ENCODE measurements at regions of chr22 and their contacts with region 1.

Region 1: DNA sequence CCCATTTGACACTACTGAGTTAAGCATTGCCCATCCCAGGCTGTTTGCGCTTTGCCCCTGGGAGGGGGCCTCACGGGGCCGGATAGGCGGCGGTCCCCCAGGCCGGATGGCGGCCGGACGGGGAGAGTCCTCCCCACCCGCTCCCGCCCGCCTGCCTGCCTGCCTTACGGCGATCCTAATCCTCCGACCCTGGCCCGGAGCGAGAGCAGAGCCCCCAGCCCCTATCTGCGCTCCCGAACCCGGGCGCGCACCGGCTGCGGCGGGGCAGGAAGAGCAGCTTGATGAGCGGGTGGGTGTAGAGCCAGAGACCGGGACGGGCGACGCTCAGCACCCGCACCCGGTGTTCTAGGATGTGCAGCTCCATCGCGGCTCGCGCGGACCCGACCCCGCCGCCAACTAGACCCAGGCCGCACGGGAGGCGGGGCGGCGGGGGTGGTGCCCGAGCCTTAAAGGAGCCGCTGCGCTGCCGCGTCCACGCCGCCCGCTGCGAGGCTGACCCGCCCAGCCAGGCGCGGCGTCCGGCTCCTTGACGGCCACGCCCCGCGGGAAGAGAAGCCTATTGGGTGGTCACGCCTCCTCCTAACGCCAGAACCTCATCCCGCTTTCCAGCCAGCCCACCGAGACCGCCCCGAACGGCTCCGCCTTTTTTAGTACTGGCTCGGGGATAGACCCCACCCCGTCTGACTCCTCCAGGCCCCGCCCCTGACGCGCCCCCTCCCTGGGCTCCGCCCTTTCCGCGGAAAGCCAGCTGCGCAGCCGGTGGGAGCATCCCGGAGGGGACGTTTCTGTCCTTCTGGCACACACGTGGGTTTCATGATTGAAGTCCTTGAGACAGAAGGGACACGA is at the start of gene CASTOR1:
- DNase-seq: peak; percentile 81 to 90
- ATAC-seq: peak; percentile 80 to 83 (median 81)
- H3K4me3 ChIP-seq: peak within 1 kb of the TSS; percentile 68
- H3K4me3 Mint-ChIP-seq: peak within 1 kb of the TSS; percentile 92
- H3K27ac ChIP-seq: peak within 1 kb of the TSS; percentile 66
- H3K27ac Mint-ChIP-seq: peak within 1 kb of the TSS; percentile 86 to 88
- H3K4me1 ChIP-seq: peaks cover 43% of the 10 kb centered on the region
- H3K4me1 Mint-ChIP-seq: peaks cover 19 to 39% of the 10 kb centered on the region in 2 donors
- H3K27me3 ChIP-seq: no peaks in the 10 kb centered on the region
- H3K27me3 Mint-ChIP-seq: no peaks in the 10 kb centered on the region
- CTCF ChIP-seq: no peak
- total RNA-seq, gene CASTOR1: 7.0 to 11.9 (median 8.8) TPM

Region 2: GRCh38 chr22:30245985-30246901 is 43.1 kb before region 1 on chr22 and contains the start of gene LIF:
- intact Hi-C with region 1: loop called (anchors 5 kb)
- DNase-seq: peak; percentile 46 to 72
- ATAC-seq: peak; percentile 80 to 93 (median 85)
- H3K4me3 ChIP-seq: peak within 1 kb of the TSS; percentile 53
- H3K4me3 Mint-ChIP-seq: peak within 1 kb of the TSS; percentile 92
- H3K27ac ChIP-seq: peak within 1 kb of the TSS; percentile 35
- H3K27ac Mint-ChIP-seq: peak within 1 kb of the TSS in 1 of 2 donors; percentile 83
- H3K4me1 ChIP-seq: peaks cover 58% of the 10 kb centered on the region
- H3K4me1 Mint-ChIP-seq: peaks cover 21 to 38% of the 10 kb centered on the region in 2 donors
- H3K27me3 ChIP-seq: peaks cover 11% of the 10 kb centered on the region
- H3K27me3 Mint-ChIP-seq: peaks cover 31 to 39% of the 10 kb centered on the region in 2 donors
- CTCF ChIP-seq: peak; percentile 41
- total RNA-seq, gene LIF: 2.0 to 2.7 (median 2.6) TPM

Region 3: DNA sequence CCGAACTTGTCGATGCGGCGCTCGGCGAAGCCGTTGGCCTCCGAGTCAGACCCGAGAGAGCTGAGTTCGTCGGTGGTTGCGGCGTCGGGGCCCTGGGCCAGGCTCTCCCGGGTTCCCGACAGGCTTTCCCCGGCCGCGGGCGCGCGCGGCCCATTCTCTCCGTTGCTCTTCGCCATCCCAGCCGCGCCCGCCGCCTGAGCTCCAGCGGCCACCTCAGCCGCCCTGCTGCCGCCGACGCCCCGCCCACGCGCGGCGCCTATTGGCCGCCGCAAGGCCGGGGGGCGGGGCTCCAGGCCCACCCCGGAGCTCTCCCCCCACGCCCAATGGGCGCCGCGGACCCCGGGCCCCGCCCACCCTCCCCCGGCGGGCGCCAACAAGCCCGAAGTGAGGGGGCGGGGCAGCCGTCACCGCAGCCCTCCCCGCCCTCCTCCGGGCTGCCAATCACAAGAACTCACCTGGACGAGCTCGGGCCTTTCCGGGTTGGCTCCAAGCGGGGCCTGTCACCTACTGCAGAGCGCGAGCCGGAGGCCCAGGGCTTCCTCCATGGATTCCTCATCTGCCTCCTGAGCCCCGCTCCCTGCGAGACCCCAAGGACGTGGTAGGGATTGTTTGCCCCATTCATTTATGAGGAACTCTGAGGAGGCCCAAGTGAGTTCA is 37.5 kb after region 1 on chr22 and contains the start of gene TBC1D10A:
- intact Hi-C with region 1: loop called (anchors 2 kb)
- DNase-seq: peak; percentile 82 to 97
- ATAC-seq: peak; percentile 92 to 97 (median 94)
- H3K4me3 ChIP-seq: peak within 1 kb of the TSS; percentile 51
- H3K4me3 Mint-ChIP-seq: peak within 1 kb of the TSS; percentile 88
- H3K27ac ChIP-seq: peak within 1 kb of the TSS; percentile 84
- H3K27ac Mint-ChIP-seq: peak within 1 kb of the TSS; percentile 82 to 84
- H3K4me1 ChIP-seq: peaks cover 47% of the 10 kb centered on the region
- H3K4me1 Mint-ChIP-seq: peaks cover 36 to 47% of the 10 kb centered on the region in 2 donors
- H3K27me3 ChIP-seq: no peaks in the 10 kb centered on the region
- H3K27me3 Mint-ChIP-seq: no peaks in the 10 kb centered on the region
- CTCF ChIP-seq: no peak
- total RNA-seq, gene TBC1D10A: 38.9 to 48.0 (median 47.9) TPM

Region 4: DNA sequence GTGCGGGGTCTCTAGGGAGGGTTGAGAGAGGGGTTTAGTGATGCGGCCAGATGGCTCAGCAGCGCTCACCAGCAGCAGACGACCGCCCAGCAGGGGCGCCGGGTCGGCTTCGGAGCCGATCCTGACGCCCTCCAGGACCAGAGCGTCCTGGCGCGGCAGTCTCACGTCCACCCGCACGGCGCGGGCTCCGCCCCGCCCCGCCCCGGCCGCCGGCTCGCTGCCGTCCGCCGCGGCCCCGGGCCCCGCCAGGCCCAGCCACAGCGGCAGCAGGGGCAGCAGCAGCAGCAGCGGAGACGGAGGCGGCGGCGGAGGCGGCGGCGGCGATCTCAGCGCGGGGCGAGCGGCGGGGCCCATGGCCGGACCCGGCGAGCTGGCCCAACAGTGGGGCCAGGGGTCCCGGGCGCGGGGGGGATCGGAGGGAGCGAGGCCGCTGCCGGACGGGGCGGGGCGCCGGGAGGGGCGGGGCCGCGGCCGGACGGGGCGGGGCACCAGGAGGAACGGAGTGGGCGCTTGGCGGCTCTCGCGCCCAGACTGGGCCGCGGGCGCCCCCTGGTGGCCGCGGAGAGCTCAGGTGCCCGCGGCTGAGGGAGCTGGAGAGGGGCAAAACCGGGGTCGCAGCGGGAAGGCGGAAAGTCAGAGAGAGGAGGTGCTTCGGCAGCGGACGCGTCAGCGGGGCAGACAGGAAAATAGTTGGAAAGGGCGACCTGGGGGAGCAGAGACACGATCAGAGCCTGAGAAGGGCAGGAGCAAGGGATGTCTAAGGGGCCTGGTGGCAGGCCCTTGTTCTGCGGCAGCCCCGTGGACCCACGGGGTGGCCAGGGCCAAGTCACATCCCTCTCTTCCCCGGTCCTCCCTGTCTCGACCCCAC is 97.8 kb after region 1 on chr22 and contains the start of gene RNF215:
- intact Hi-C with region 1: loop called (anchors 1 kb)
- DNase-seq: peak; percentile 87 to 90
- ATAC-seq: peak; percentile 94 to 97 (median 95)
- H3K4me3 ChIP-seq: peak within 1 kb of the TSS; percentile 9
- H3K4me3 Mint-ChIP-seq: peak within 1 kb of the TSS; percentile 52
- H3K27ac ChIP-seq: no peak within 1 kb of the TSS
- H3K27ac Mint-ChIP-seq: peak within 1 kb of the TSS in 1 of 2 donors; percentile 76
- H3K4me1 ChIP-seq: peaks cover 12% of the 10 kb centered on the region
- H3K4me1 Mint-ChIP-seq: peaks cover 5 to 6% of the 10 kb centered on the region in 2 donors
- H3K27me3 ChIP-seq: no peaks in the 10 kb centered on the region
- H3K27me3 Mint-ChIP-seq: peaks cover 0 to 5% of the 10 kb centered on the region in 2 donors
- CTCF ChIP-seq: peak; percentile 89
- total RNA-seq, gene RNF215: 7.5 to 9.8 (median 9.5) TPM

Region 5: DNA sequence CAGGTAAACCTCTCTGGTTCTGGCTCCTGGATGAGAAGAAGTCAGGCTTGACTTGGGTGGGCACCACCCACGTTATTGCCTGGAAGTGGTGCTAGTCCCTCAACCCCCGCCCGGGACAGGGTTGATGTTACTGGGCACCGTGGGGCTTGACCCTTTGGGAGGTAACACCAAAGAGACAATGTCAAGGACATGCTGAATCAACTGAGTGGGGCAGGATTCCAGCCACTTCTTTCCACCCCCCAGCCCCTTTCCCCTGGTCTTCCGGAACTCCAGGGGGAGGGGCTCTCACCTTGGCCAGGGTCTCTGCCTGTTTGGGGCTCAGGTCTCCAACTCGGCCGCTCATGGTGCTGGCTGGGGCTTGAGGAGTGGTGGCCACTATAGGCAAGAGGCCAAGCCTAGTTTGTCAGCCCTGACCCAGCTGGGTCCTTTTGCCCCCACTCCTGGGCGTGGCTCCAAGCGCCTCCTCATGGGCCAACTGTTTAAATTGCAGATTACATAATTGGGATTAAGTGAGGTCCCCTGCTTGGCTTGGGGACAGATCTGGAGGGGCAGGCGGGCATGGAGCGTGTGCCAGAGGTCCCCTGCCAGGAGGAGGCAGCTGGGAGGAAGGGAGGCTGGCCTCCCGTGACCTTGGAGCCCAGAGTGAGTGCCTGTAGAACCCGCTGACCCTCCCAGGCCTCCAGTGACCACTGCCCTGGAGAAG is 182.4 kb after region 1 on chr22 and contains the start of gene SEC14L3:
- intact Hi-C with region 1: no loop called
- DNase-seq: no peak
- ATAC-seq: no peak
- H3K4me3 ChIP-seq: no peak within 1 kb of the TSS
- H3K4me3 Mint-ChIP-seq: no peak within 1 kb of the TSS
- H3K27ac ChIP-seq: no peak within 1 kb of the TSS
- H3K27ac Mint-ChIP-seq: peak within 1 kb of the TSS; percentile 70 to 74
- H3K4me1 ChIP-seq: peaks cover 15% of the 10 kb centered on the region
- H3K4me1 Mint-ChIP-seq: peaks cover 8% of the 10 kb centered on the region in 2 donors
- H3K27me3 ChIP-seq: peaks cover 10% of the 10 kb centered on the region
- H3K27me3 Mint-ChIP-seq: peaks cover 7 to 17% of the 10 kb centered on the region in 2 donors
- CTCF ChIP-seq: no peak
- total RNA-seq, gene SEC14L3: not detected